T-cell (primary cell): ENCODE measurements at regions of chr3 and their contacts with region 1.

Region 1: GRCh38 chr3:172635588-172635987 is 75.3 kb downstream of the NCEH1 start:
- DNase-seq: peak in 1 of 35 experiments; percentile 8
- ATAC-seq: peak in 1 of 4 experiments; percentile 29
- H3K4me3 ChIP-seq: no peak overlapping the region
- H3K4me3 Mint-ChIP-seq: no peak overlapping the region
- H3K27ac ChIP-seq: no peak overlapping the region
- H3K27ac Mint-ChIP-seq: no peak overlapping the region
- H3K4me1 ChIP-seq: no peaks in the 10 kb centered on the region
- H3K4me1 Mint-ChIP-seq: peaks cover 0 to 2% (median 0%) of the 10 kb centered on the region in 3 donors
- H3K27me3 ChIP-seq: no peaks in the 10 kb centered on the region
- H3K27me3 Mint-ChIP-seq: no peaks in the 10 kb centered on the region

Region 2: GRCh38 chr3:172375206-172375850 is 260.3 kb before region 1 on chr3:
- CTCF ChIA-PET with region 1: interaction called in 1 of 2 experiments, 11 read pairs
- POLR2A ChIA-PET with region 1: no interaction called
- DNase-seq: no peak
- ATAC-seq: no peak
- H3K4me3 ChIP-seq: no peak overlapping the region
- H3K4me3 Mint-ChIP-seq: no peak overlapping the region
- H3K27ac ChIP-seq: no peak overlapping the region
- H3K27ac Mint-ChIP-seq: no peak overlapping the region
- H3K4me1 ChIP-seq: no peaks in the 10 kb centered on the region
- H3K4me1 Mint-ChIP-seq: no peaks in the 10 kb centered on the region
- H3K27me3 ChIP-seq: no peaks in the 10 kb centered on the region
- H3K27me3 Mint-ChIP-seq: no peaks in the 10 kb centered on the region

Region 3: GRCh38 chr3:172622916-172623700 is 12.5 kb before region 1 on chr3:
- CTCF ChIA-PET with region 1: interaction called, 4 to 10 read pairs
- POLR2A ChIA-PET with region 1: no interaction called
- DNase-seq: peak in 24 of 35 experiments; percentile 3 to 69 (median 19)
- ATAC-seq: peak in 3 of 4 experiments; percentile 38 to 68 (median 65)
- H3K4me3 ChIP-seq: no peak overlapping the region
- H3K4me3 Mint-ChIP-seq: peak overlapping the region in 1 of 3 donors; percentile 22
- H3K27ac ChIP-seq: no peak overlapping the region
- H3K27ac Mint-ChIP-seq: no peak overlapping the region
- H3K4me1 ChIP-seq: no peaks in the 10 kb centered on the region
- H3K4me1 Mint-ChIP-seq: peaks cover 5 to 9% (median 6%) of the 10 kb centered on the region in 3 donors
- H3K27me3 ChIP-seq: no peaks in the 10 kb centered on the region
- H3K27me3 Mint-ChIP-seq: no peaks in the 10 kb centered on the region

Region 4: GRCh38 chr3:172824229-172824628 is 188.6 kb after region 1 on chr3:
- CTCF ChIA-PET with region 1: no interaction called
- POLR2A ChIA-PET with region 1: no interaction called
- DNase-seq: no peak
- ATAC-seq: no peak
- H3K4me3 ChIP-seq: no peak overlapping the region
- H3K4me3 Mint-ChIP-seq: no peak overlapping the region
- H3K27ac ChIP-seq: no peak overlapping the region
- H3K27ac Mint-ChIP-seq: no peak overlapping the region
- H3K4me1 ChIP-seq: no peaks in the 10 kb centered on the region
- H3K4me1 Mint-ChIP-seq: no peaks in the 10 kb centered on the region
- H3K27me3 ChIP-seq: no peaks in the 10 kb centered on the region
- H3K27me3 Mint-ChIP-seq: no peaks in the 10 kb centered on the region

Region 5: DNA sequence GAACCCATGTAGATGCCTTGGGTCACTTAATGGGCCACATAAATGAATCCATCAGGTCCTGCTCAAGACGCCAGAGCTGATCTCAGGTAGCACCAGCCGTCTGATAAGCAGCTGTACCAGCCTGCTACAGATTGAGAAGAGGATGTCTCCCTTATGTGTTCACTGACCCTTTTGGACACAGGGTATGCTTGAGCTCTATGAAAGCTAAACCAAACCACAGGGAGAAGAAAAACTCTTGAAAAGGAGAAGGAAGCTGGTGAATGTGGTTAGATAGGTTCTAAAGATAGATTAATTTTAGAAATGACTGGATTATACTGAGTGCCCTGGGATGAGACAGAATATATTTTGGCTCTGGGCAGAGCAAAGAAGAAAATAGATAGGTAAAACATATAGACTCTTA is 318.0 kb after region 1 on chr3:
- CTCF ChIA-PET with region 1: no interaction called
- POLR2A ChIA-PET with region 1: no interaction called
- DNase-seq: no peak
- ATAC-seq: no peak
- H3K4me3 ChIP-seq: no peak overlapping the region
- H3K4me3 Mint-ChIP-seq: no peak overlapping the region
- H3K27ac ChIP-seq: no peak overlapping the region
- H3K27ac Mint-ChIP-seq: no peak overlapping the region
- H3K4me1 ChIP-seq: no peaks in the 10 kb centered on the region
- H3K4me1 Mint-ChIP-seq: no peaks in the 10 kb centered on the region
- H3K27me3 ChIP-seq: no peaks in the 10 kb centered on the region
- H3K27me3 Mint-ChIP-seq: peaks cover 0 to 4% of the 10 kb centered on the region in 2 donors